ENCODE measurements at regions of chr19 and their contacts with region 1.

Region 1: DNA sequence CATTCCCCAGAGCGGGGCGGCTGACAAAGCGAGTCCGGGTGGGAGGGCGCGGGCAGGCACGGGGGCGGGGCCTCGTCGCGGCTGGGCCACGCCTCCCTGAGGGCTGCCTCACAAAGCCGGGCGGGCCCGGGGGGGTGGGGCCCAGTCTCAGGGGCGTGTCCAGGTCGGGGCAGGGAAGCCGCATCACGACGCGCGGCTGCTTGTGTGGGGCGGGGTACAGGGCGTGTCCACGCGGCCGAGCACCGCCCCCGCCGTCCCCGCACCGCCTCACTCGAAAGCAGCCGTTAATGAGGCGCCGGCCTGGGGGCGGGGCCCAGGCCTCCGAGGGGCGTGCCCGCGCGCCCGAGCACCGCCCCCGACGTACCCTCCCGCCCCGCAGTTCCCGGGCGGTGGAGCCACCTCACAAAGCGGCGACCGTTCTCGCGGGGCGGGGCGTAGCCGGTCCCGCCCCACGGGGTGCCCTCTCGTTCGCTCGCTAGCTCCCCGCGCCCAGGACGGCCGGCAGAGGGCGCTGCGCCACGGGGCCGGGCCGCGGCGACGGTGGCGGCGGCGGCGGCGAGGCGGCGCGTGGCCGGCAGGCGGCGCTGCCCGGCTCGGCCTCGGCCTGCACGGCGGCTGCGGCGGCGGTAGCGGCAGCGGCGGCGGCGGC is at the start of gene CARM1:
- DNase-seq: peak; percentile 85
- H3K4me3 ChIP-seq: peak within 1 kb of the TSS; percentile 96
- H3K27me3 ChIP-seq: no peaks in the 10 kb centered on the region
- CTCF ChIP-seq: peak; percentile 49
- polyA plus RNA-seq, gene CARM1: 17.9 and 33.7 TPM in 2 replicates

Region 2: GRCh38 chr19:10748924-10749434 is 122.1 kb before region 1 on chr19:
- CTCF ChIA-PET with region 1: no interaction called
- POLR2A ChIA-PET with region 1: no interaction called
- DNase-seq: no peak
- H3K4me3 ChIP-seq: no peak overlapping the region
- H3K27me3 ChIP-seq: no peaks in the 10 kb centered on the region
- CTCF ChIP-seq: no peak

Region 3: GRCh38 chr19:10828981-10829821 is 41.9 kb before region 1 on chr19:
- CTCF ChIA-PET with region 1: no interaction called
- POLR2A ChIA-PET with region 1: no interaction called
- DNase-seq: no peak
- H3K4me3 ChIP-seq: no peak overlapping the region
- H3K27me3 ChIP-seq: no peaks in the 10 kb centered on the region
- CTCF ChIP-seq: 0 out of 2 replicates have a peak, but pooled peaks have one; percentile 7

Region 4: DNA sequence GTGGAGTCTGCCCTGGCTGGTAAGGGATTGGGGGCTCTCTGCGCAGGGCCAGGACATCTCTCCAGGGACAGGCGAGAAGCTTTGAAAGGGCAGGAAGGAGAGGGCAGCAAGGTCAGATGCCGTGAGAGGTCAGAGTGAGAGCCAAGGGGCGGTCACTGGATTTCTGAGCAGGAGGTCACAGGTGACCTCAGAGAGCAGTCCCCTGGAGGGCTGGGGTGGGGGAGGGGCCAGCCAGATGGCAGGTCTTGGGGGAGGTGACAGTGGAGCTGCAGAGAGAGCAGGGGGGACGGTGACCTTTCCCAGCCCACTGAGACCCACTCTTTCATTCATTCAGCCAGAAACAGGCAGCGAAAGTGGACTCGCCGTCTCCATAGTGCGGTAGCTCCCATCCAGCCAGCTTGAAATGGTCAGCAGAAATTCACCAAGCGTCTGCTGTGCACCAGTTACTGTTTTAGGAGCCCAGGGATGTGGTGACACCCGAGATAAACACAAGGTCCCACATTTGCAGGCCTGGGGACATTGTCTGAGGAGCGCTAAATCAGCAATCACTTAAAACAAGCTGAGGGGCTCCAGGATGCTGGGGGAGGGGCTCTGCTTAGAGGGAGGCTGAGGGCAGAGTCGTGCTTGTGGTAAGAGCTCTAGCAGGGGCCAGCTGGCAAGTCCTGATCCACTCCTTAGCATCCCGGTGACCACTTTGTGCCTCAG is 10.5 kb after region 1 on chr19:
- CTCF ChIA-PET with region 1: interaction called, 13 read pairs
- POLR2A ChIA-PET with region 1: no interaction called
- DNase-seq: no peak
- H3K4me3 ChIP-seq: no peak overlapping the region
- H3K27me3 ChIP-seq: no peaks in the 10 kb centered on the region
- CTCF ChIP-seq: no peak

Region 5: DNA sequence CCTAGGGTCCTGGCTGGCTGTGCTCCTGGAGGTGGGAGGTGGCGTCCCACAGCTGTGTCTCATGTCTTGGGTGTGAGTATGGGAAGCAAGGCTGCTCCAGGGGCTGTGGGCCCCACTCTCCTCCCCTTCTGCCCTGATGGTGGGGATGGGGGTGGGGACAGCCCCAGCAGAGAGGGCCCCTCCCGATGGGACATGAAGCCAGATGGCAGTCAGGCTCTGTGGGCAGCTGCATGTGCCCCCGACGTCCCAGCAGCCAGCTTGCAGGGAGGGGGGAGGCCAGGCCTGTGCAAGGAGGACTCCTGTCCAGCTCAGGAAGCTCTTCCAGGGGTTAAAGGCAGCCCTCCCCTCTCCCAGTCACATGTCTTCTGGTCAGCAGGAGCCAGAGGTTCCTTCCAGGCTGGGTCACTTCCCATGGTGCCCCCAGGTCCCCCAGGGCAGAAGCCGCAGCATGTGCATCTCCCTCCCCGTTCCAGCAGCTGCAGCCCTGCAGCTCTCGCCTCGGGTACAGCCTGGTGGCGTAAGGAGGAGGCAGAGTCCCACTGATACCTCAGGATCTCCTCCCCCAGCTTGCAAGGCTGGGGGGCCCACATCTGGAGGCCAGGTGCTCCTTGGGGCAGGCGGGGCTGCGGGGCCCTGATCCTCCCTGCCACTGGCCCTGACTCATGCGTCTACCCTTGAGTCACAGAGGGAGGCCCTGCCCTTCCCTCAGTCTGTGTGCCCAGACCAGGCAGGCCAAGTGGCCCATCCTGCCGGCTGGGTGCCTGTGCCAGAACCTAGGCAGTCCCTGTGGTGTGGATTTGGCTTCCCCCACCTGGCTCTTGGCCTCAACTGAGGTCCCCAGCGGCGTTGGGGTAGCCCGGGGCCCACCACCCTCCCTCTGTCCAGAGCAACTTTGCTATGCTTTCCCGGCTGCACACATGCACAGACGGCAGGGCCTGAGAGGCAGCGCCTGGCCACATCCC is 44.3 kb after region 1 on chr19:
- CTCF ChIA-PET with region 1: interaction called, 37 read pairs
- POLR2A ChIA-PET with region 1: no interaction called
- DNase-seq: peak; percentile 78
- H3K4me3 ChIP-seq: no peak overlapping the region
- H3K27me3 ChIP-seq: no peaks in the 10 kb centered on the region
- CTCF ChIP-seq: peak; percentile 72